PC-9 (cell line): ENCODE measurements at regions of chr5 and their contacts with region 1.

Region 1: DNA sequence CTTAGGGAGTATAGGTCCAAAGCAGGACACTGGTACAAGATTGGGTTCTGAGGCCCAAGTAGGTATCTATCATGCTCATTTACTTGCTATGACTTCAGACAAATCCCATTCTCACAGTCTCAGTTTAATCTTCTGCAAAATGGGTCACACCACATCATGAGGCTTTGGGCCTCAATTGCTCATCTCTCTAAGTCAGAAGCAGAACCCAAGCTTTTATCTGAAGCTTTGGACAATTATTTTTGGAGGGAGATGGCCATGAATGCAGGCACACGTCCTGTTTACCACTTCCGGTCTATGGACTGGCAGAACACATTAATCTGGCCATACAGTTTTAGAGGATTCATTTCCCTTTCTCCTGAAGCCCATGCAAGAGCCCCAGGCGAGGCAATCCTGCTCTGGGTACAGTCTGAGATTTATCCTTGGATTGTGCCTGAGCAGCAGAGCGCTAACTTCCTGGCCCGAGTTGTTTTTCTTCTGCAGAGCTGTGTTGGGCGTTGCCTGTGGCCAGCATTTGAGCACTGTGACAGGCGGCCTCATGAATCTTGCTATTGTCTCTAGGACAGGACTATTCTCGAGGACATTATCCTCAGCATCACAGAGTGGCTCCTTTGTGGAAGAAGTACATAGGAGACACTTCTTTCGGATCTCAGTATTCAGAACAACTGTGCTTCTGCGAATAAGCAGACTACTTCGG is 16.1 kb downstream of the SLC22A4 start:
- DNase-seq: no peak
- H3K4me3 ChIP-seq: no peak overlapping the region
- H3K27ac ChIP-seq: no peak overlapping the region
- H3K4me1 ChIP-seq: no peaks in the 10 kb centered on the region
- H3K27me3 ChIP-seq: no peaks in the 10 kb centered on the region
- CTCF ChIP-seq: no peak

Region 2: DNA sequence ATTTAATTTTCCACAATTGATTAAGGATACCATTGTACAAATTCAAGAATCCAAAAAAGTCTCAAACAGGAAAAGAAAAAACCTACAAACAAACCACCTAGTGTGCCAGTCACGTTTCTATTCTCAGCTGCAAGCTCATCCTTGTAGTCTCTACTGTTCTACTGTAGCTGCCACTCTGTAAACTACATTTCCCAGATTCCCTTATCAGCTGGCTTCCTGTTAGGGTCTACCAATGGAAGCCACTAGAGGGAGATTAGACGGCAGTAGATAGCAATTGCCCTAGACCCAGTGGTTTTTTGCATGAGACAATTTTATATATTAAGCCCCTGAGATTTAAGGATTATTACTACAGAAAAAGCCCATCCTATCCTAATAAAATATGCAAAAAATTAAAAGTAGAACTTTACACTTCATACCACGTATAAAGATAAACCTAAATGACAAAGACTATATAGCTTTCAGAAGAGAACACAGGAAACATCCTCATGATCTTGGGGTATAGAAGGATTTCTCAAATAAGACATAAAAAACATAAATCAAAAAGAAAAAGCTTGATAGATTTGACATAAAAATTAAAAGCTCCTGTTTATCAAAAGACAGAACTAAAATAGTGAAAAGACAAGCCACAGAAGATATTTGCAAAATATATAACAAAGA is 120.0 kb before region 1 on chr5:
- CTCF ChIA-PET with region 1: interaction called, 13 read pairs
- POLR2A ChIA-PET with region 1: no interaction called
- intact Hi-C with region 1: no loop called
- DNase-seq: peak; percentile 11 to 57
- H3K4me3 ChIP-seq: no peak overlapping the region
- H3K27ac ChIP-seq: no peak overlapping the region
- H3K4me1 ChIP-seq: no peaks in the 10 kb centered on the region
- H3K27me3 ChIP-seq: no peaks in the 10 kb centered on the region
- CTCF ChIP-seq: peak; percentile 81

Region 3: DNA sequence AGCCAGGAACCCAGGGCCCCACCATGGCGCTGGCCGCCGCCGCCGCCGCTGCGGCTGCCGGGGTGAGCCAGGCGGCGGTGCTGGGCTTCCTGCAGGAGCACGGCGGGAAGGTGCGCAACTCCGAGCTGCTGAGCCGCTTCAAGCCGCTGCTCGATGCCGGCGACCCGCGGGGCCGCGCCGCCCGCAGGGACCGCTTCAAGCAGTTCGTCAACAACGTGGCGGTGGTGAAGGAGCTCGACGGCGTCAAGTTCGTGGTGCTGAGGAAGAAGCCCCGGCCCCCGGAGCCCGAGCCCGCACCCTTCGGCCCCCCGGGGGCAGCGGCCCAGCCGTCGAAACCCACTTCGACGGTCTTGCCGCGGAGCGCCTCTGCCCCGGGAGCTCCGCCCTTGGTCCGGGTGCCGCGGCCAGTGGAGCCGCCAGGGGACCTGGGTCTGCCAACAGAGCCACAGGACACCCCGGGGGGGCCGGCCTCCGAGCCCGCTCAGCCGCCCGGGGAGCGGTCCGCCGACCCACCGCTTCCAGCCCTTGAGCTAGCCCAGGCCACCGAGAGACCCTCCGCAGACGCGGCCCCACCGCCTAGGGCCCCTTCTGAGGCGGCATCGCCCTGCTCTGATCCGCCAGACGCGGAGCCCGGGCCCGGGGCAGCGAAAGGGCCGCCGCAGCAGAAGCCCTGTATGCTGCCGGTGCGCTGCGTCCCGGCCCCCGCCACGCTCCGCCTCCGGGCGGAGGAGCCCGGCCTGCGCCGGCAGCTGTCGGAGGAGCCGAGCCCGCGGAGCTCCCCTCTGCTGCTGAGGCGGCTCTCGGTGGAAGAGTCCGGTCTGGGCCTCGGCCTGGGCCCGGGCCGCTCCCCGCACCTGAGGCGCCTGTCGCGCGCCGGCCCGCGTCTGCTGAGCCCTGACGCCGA is 503.6 kb after region 1 on chr5:
- CTCF ChIA-PET with region 1: no interaction called
- POLR2A ChIA-PET with region 1: no interaction called
- intact Hi-C with region 1: no loop called
- DNase-seq: no peak
- H3K4me3 ChIP-seq: no peak overlapping the region
- H3K27ac ChIP-seq: no peak overlapping the region
- H3K4me1 ChIP-seq: peaks cover 21% of the 10 kb centered on the region
- H3K27me3 ChIP-seq: no peaks in the 10 kb centered on the region
- CTCF ChIP-seq: no peak

Region 4: GRCh38 chr5:133240425-133241091 is 930.3 kb after region 1 on chr5:
- CTCF ChIA-PET with region 1: no interaction called
- POLR2A ChIA-PET with region 1: interaction called, 11 read pairs
- intact Hi-C with region 1: no loop called
- DNase-seq: peak; percentile 60 to 94
- H3K4me3 ChIP-seq: no peak overlapping the region
- H3K27ac ChIP-seq: no peak overlapping the region
- H3K4me1 ChIP-seq: peaks cover 37% of the 10 kb centered on the region
- H3K27me3 ChIP-seq: no peaks in the 10 kb centered on the region
- CTCF ChIP-seq: no peak